Heart right ventricle (tissue), 16 donors: ENCODE measurements at regions of chr6 and their contacts with region 1.

Region 1: DNA sequence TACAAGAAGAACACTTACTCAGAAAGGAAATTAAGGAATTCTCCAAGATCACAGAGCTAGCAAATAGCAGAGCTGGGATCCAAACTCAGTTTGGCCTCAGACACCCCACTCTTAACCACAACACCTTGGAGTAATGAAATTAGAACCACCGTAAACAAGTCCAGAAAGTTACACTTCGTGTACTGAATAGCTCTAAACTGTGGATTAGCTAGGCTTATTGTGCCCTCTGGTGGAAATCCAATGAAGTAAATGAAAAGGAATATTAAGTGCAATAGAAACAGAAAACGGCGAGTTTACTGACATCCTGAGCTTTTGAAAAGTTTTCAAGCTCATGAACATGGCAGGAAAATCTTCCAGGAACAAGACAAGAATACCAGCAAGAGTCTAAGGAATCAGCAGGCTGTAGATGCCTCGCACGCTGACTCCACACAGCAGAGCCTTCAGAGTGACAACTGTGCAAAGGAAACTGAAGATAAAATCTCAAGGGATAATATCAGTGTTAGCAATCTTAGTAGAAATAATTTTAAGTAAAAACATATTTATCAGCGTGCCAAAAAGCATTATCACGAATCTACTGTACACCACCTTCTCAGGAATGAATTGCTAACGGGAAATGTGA is 34.6 kb downstream of the FBXO5 start:
- DNase-seq: peak in 1 of 2 donors; percentile 7
- ATAC-seq: peak in 6 of 8 donors; percentile 52 to 75 (median 68)
- H3K4me3 ChIP-seq: peak overlapping the region in 2 of 10 donors; percentile 5 to 27
- H3K27ac ChIP-seq: no peak overlapping the region
- H3K4me1 ChIP-seq: peaks cover 0 to 11% (median 0%) of the 10 kb centered on the region in 9 donors
- H3K27me3 ChIP-seq: peaks cover 0 to 29% (median 3%) of the 10 kb centered on the region in 7 donors
- CTCF ChIP-seq: peak; percentile 36 to 78 (median 65)

Region 2: GRCh38 chr6:152543519-152543918 is 404.7 kb before region 1 on chr6:
- intact Hi-C with region 1: no loop called
- DNase-seq: no peak
- ATAC-seq: no peak
- H3K4me3 ChIP-seq: no peak overlapping the region
- H3K27ac ChIP-seq: no peak overlapping the region
- H3K4me1 ChIP-seq: no peaks in the 10 kb centered on the region
- H3K27me3 ChIP-seq: no peaks in the 10 kb centered on the region
- CTCF ChIP-seq: no peak

Region 3: DNA sequence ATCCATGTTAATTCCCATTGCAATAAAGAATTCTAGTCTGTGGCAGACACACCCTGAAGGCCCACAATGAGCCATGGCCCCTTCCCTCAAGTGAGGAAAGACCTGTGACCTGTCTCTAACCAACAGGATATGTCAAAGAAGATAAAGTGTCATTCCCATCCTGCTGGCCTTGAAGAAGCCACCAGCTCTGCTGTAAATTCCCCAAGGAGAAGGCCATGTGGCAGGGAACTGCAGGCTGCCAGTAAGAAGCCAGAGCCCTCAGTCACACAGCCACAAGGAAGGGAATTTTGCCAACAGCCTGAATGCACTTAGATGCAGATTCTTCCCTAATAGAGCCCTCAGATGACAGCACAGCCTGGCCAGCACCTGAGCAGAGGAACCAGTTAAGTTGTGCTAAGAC is 172.8 kb before region 1 on chr6:
- intact Hi-C with region 1: no loop called
- DNase-seq: no peak
- ATAC-seq: no peak
- H3K4me3 ChIP-seq: no peak overlapping the region
- H3K27ac ChIP-seq: no peak overlapping the region
- H3K4me1 ChIP-seq: no peaks in the 10 kb centered on the region
- H3K27me3 ChIP-seq: no peaks in the 10 kb centered on the region
- CTCF ChIP-seq: no peak

Region 4: DNA sequence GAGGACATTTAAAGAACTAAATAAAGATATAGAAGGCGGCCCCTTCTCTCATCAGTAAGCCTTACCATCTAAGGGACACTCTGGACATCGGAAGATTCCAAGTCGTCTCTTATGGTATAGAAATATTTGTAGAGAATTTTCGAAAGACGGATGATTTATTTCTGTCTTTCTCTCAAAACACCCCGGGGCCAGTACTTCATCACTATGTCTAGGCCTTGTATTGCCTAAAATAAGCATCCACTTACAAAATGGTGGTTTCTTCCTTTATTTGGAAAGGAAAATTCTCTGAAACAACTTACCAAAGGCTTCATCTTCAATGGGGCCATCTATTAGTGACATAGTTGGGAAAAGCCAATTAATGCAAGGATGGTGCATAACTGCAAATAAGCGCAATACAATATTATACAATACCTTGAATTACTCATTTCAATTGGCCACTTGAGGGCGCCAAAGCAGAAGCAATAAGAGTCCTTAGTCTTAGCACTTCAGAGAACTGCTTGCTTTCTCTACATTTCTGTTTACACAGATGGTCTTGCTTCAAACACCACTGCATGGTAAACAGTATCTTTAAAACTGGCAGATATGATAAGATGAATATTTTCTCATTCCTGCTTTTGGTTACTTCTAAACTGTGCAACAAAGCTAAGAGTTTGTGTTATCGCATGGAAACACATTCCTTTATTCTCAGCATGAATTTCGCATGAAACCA is 84.5 kb before region 1 on chr6:
- intact Hi-C with region 1: loop called (anchors 1 to 5 kb)
- DNase-seq: peak in 1 of 2 donors; percentile 73
- ATAC-seq: peak; percentile 61 to 84 (median 76)
- H3K4me3 ChIP-seq: no peak overlapping the region
- H3K27ac ChIP-seq: no peak overlapping the region
- H3K4me1 ChIP-seq: no peaks in the 10 kb centered on the region
- H3K27me3 ChIP-seq: peaks cover 0 to 5% (median 0%) of the 10 kb centered on the region in 7 donors
- CTCF ChIP-seq: peak; percentile 59 to 80 (median 76)

Region 5: DNA sequence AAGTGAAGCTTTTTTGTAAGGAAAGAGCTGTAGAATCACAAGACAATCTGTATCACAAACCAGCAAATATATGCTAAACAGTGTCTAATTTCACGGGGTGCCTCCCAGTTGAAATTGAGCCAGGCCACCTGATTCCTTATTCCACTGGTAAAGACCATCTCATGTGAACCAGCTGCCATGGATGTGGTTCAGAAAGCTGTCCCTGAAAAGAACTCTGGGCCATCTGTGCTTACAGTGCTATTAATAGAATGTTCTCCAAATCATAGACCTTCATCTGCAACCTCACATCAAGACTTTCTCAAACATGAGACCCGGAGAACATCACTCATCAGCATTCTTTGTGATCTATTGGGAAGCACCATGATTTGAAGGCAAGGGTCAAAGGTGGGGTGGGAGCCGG is 55.1 kb before region 1 on chr6:
- intact Hi-C with region 1: loop called in 1 of 10 experiments (anchors 2 kb)
- DNase-seq: no peak
- ATAC-seq: no peak
- H3K4me3 ChIP-seq: no peak overlapping the region
- H3K27ac ChIP-seq: no peak overlapping the region
- H3K4me1 ChIP-seq: no peaks in the 10 kb centered on the region
- H3K27me3 ChIP-seq: peaks cover 0 to 17% (median 0%) of the 10 kb centered on the region in 7 donors
- CTCF ChIP-seq: no peak